Activated CD4-positive, alpha-beta T cell treated with anti-CD3 and anti-CD28 coated beads, Interleukin-2, amount 10 ng/mL, durations not matched to agents 24 days and 14 days (primary cell): ENCODE measurements at regions of chr6 and their contacts with region 1.

Region 1: DNA sequence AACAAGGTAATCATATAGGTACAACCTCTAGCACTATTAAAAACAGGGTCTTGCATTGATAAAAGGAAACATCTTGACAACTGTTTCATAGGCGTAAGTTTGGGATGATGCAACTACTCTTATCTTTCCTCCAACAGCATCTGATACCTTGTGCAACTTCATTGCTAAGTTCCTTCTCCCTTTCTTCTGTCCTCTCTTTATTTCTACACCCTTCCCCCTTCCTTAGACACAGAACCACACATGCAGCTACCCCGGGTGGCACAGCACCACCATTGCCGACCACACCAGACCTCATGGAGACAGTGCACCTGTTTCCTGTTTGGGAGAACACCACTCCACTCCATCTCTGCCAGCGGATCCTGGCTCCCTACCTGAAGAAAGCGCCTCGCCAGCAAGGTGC is 14.4 kb downstream of the MYB start:
- DNase-seq: no peak
- H3K4me3 Mint-ChIP-seq: no peak overlapping the region
- H3K27ac Mint-ChIP-seq: peak overlapping the region; percentile 62
- H3K4me1 Mint-ChIP-seq: peaks cover 35% of the 10 kb centered on the region
- H3K27me3 Mint-ChIP-seq: no peaks in the 10 kb centered on the region

Region 2: GRCh38 chr6:135147637-135148592 is 47.6 kb before region 1 on chr6:
- intact Hi-C with region 1: no loop called
- DNase-seq: no peak
- H3K4me3 Mint-ChIP-seq: peak overlapping the region; percentile 3
- H3K27ac Mint-ChIP-seq: peak overlapping the region; percentile 50
- H3K4me1 Mint-ChIP-seq: peaks cover 44% of the 10 kb centered on the region
- H3K27me3 Mint-ChIP-seq: no peaks in the 10 kb centered on the region

Region 3: GRCh38 chr6:135162678-135163439 is 32.7 kb before region 1 on chr6:
- intact Hi-C with region 1: loop called (anchors 1 kb)
- DNase-seq: peak; percentile 75
- H3K4me3 Mint-ChIP-seq: peak overlapping the region; percentile 61
- H3K27ac Mint-ChIP-seq: peak overlapping the region; percentile 93
- H3K4me1 Mint-ChIP-seq: peaks cover 47% of the 10 kb centered on the region
- H3K27me3 Mint-ChIP-seq: no peaks in the 10 kb centered on the region

Region 4: DNA sequence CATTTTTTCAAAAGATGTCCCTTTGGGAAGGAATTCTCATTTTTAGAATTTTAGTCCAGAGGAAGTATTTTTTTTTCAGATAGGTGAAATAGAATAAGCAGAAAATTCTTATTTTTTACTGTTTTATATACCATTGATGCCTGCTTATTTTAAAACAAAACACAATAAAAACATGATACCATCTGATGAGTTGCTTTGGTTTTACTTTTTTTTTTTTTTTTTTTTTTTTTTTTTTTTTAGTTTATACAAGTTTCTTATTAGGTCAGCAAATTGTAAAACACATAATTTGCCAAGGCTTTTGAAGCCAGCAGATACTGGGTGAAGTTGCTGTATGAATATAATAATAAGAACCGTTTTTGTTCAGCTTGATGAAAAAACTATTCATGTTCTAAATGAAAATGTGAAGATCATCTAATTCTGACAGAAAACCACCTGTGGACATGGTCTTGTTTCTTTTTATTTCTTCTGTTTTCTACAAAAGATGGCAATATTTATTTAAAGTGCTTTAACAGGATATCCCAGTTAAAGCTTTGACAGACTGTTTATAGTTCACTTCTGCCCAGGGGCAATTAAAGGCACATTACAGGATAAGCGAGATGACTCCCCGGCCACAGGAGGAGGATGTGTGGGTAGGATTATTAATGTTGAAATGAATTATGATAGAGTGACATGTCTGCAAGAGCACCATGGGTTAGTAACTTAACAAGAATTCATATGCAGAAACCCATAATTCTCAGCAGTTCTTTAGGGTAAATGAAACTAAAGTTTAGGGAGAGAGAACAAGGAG is 16.7 kb after region 1 on chr6:
- intact Hi-C with region 1: loop called (anchors 2 kb)
- DNase-seq: no peak
- H3K4me3 Mint-ChIP-seq: peak overlapping the region; percentile 69
- H3K27ac Mint-ChIP-seq: peak overlapping the region; percentile 84
- H3K4me1 Mint-ChIP-seq: peaks cover 40% of the 10 kb centered on the region
- H3K27me3 Mint-ChIP-seq: no peaks in the 10 kb centered on the region

Region 5: DNA sequence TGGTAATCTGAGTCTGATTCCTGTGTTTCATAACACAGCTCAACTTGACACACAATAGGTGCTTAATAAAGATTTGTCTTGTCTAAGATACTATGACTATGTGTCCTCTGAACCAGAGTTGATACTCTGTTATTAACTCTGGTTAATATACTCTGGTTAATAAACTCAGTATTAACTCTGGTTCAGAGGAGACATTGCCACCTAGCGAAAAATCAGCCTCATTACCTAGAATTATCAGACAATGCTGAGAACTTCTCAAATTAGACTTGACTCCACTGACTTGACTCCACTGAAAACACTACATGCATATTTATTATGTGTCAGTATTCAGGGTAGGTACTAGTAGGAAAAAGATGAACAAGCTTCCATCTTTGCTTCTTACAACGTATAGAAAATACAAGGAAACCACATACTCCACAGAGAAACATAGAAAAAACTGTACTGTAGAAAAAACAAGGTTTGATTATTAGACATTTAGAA is 228.2 kb after region 1 on chr6:
- intact Hi-C with region 1: loop called (anchors 5 kb)
- DNase-seq: peak; percentile 61
- H3K4me3 Mint-ChIP-seq: no peak overlapping the region
- H3K27ac Mint-ChIP-seq: peak overlapping the region; percentile 77
- H3K4me1 Mint-ChIP-seq: peaks cover 8% of the 10 kb centered on the region
- H3K27me3 Mint-ChIP-seq: no peaks in the 10 kb centered on the region